Tibial artery (tissue), 4 donors: ENCODE measurements at regions of chr9 and their contacts with region 1.

Region 1: DNA sequence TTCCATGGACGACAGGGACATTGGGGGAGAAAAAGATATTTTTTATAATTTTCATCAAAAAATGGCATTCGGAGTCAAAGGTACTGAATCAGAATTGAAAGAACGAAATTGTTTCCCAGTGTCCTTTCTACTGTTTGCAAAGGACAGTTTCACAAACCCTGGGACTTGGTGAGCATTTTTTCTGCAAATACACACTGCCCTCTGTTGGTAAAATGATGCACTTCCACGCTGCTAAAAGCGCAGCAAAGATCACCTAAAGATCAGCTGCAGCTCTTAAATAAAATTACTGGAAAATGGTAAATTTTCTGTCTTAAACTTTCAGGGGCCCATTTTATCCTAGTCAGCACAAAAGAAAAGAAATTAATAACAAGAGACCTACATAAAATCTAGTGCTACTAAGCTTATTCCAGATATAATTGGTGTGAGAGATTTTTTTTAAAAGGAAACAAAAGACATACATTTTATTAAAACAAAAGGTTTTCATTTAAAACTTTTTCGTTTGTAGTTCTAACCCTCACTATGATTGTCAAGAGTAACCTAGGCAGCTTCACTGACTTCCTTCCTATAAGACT is 566.0 kb downstream of the CAAP1 start:
- DNase-seq: no peak
- H3K4me3 ChIP-seq: no peak overlapping the region
- H3K27ac ChIP-seq: no peak overlapping the region
- H3K4me1 ChIP-seq: peaks cover 0 to 3% (median 0%) of the 10 kb centered on the region in 4 donors
- H3K27me3 ChIP-seq: no peaks in the 10 kb centered on the region
- CTCF ChIP-seq: peak; percentile 73 to 79

Region 2: GRCh38 chr9:25964239-25964638 is 362.3 kb before region 1 on chr9:
- intact Hi-C with region 1: loop called (anchors 10 kb)
- DNase-seq: no peak
- H3K4me3 ChIP-seq: no peak overlapping the region
- H3K27ac ChIP-seq: no peak overlapping the region
- H3K4me1 ChIP-seq: no peaks in the 10 kb centered on the region
- H3K27me3 ChIP-seq: no peaks in the 10 kb centered on the region
- CTCF ChIP-seq: peak; percentile 38